ENCODE measurements at regions of chr1 and their contacts with region 1.

Region 1: DNA sequence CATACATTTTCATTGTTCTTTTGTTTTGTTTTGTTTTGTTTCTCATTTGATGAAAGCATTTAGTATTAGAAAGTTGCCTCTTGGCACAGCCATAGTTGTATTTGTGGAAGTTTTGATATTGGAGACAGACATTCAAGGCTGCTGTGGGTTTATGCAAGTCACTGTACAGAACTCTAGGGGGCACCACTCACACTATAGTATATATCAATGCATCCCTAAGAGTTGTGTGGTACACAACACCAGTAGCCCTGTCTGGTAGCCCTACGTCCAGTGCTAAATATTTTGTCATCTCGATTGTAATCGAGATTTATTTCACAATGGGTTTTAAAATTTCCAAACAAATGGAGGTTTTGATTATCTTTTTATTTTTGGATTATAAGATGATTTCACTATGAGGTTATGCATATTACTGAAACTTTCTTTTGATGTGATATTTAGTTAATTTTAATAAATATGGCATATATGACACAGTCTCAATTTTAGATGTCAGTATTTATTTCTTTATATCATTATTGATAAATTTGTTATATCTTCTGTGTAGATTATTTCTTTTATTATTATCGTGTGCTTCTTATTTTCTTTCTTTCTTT is 112.2 kb downstream of the NR5A2 start:
- DNase-seq: no peak
- ATAC-seq: no peak

Region 2: DNA sequence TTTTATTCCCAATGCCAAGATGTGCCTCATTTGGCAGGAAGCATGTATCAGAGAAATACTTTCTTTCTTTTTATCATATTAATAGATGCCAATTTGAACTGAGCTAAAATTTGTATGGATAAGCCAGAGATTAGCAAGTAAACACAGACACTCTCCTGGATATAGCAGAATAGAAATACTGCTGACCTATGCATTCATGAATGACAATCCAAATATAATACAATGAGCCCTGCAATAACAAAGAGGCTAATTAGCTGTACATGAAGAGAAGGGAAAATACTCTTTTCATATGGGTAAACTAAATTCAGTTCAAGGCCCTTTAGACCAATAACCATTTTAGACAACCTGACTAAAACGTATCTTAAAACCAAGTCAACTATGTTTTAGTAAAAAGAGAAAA is 500.3 kb before region 1 on chr1:
- intact Hi-C with region 1: no loop called
- DNase-seq: no peak
- ATAC-seq: no peak

Region 3: GRCh38 chr1:200038981-200039848 is 100.5 kb before region 1 on chr1:
- intact Hi-C with region 1: loop called (anchors 10 kb)
- DNase-seq: peak; percentile 56
- ATAC-seq: peak; percentile 60

Measured in Right ventricle myocardium superior (tissue), 1 donor.